ENCODE measurements at regions of chr1 and their contacts with region 1.

Region 1: GRCh38 chr1:42747125-42747524 is 7.1 kb upstream of the CLDN19 start:
- DNase-seq: peak in 1 of 2 experiments; percentile 10
- ATAC-seq: peak in 1 of 2 experiments; percentile 75; a peak in 3 of 6 replicates
- H3K4me3 ChIP-seq: no peak overlapping the region
- H3K27ac ChIP-seq: no peak overlapping the region
- H3K4me1 ChIP-seq: no peaks in the 10 kb centered on the region
- CTCF ChIP-seq: peak; percentile 39
- EP300 ChIP-seq: no peak
- POLR2A ChIP-seq: no peak
- RAD21 ChIP-seq: peak; percentile 42 to 50; a peak in 3 of 5 replicates

Region 2: GRCh38 chr1:42736150-42736850 is 10.8 kb before region 1 on chr1:
- CTCF ChIA-PET with region 1: interaction called, 11 read pairs
- POLR2A ChIA-PET with region 1: no interaction called
- DNase-seq: peak; percentile 21 to 40
- ATAC-seq: peak; percentile 51 to 85; a peak in 4 of 6 replicates
- H3K4me3 ChIP-seq: no peak overlapping the region
- H3K27ac ChIP-seq: no peak overlapping the region
- H3K4me1 ChIP-seq: no peaks in the 10 kb centered on the region
- CTCF ChIP-seq: no peak
- EP300 ChIP-seq: no peak
- POLR2A ChIP-seq: no peak
- RAD21 ChIP-seq: no peak

Region 3: GRCh38 chr1:42756956-42757891 is 10.1 kb after region 1 on chr1:
- CTCF ChIA-PET with region 1: interaction called, 21 read pairs
- POLR2A ChIA-PET with region 1: no interaction called
- DNase-seq: peak; percentile 56 to 70
- ATAC-seq: peak; percentile 91 to 93
- H3K4me3 ChIP-seq: no peak overlapping the region
- H3K27ac ChIP-seq: no peak overlapping the region
- H3K4me1 ChIP-seq: no peaks in the 10 kb centered on the region
- CTCF ChIP-seq: peak; percentile 50
- EP300 ChIP-seq: no peak
- POLR2A ChIP-seq: no peak
- RAD21 ChIP-seq: peak; percentile 30 to 33; a peak in 3 of 5 replicates

Measured in A549 (cell line).